Heart right ventricle (tissue), 16 donors: ENCODE measurements at regions of chr1 and their contacts with region 1.

Region 1: GRCh38 chr1:246506674-246507481 is at the start of gene SMYD3:
- DNase-seq: peak; percentile 71 to 84
- ATAC-seq: peak; percentile 96 to 99 (median 98)
- H3K4me3 ChIP-seq: peak within 1 kb of the TSS; percentile 71 to 96 (median 86)
- H3K27ac ChIP-seq: peak within 1 kb of the TSS in 9 of 10 donors; percentile 11 to 77 (median 49)
- H3K4me1 ChIP-seq: peaks cover 0 to 17% (median 8%) of the 10 kb centered on the region in 9 donors
- H3K27me3 ChIP-seq: no peaks in the 10 kb centered on the region
- CTCF ChIP-seq: peak in 4 of 9 donors; percentile 17 to 41 (median 36)
- total RNA-seq, gene SMYD3: 6.1 to 13.9 (median 8.1) TPM

Region 2: GRCh38 chr1:246398126-246398820 is 108.6 kb before region 1 on chr1:
- intact Hi-C with region 1: no loop called
- DNase-seq: no peak
- ATAC-seq: no peak
- H3K4me3 ChIP-seq: no peak overlapping the region
- H3K27ac ChIP-seq: no peak overlapping the region
- H3K4me1 ChIP-seq: no peaks in the 10 kb centered on the region
- H3K27me3 ChIP-seq: no peaks in the 10 kb centered on the region
- CTCF ChIP-seq: no peak

Region 3: DNA sequence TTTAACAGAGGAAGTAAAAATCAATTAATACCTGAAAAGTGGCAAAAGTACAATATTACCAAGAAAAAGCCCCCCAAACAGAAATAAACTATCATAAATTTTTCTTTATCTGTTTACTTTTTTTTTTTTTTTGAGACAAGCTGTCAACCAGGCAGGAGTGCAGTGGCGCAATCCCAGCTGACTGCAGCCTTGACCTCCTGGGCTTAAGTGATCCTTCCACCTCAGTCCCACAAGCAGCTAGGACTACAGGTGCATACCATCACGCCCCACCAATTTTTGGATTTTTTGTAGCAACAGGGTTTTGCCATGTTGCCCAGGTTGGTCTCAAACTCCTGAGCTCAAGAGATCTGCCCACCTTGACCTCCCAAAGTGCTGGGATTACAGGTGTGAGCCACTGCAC is 51.2 kb after region 1 on chr1:
- intact Hi-C with region 1: loop called in 1 of 10 experiments (anchors 5 kb)
- DNase-seq: no peak
- ATAC-seq: no peak
- H3K4me3 ChIP-seq: no peak overlapping the region
- H3K27ac ChIP-seq: no peak overlapping the region
- H3K4me1 ChIP-seq: no peaks in the 10 kb centered on the region
- H3K27me3 ChIP-seq: no peaks in the 10 kb centered on the region
- CTCF ChIP-seq: no peak

Region 4: GRCh38 chr1:246699095-246699735 is 192.3 kb after region 1 on chr1:
- intact Hi-C with region 1: loop called in 2 of 10 experiments (anchors 5 kb)
- DNase-seq: peak; percentile 81 to 92
- ATAC-seq: peak; percentile 88 to 97 (median 92)
- H3K4me3 ChIP-seq: peak overlapping the region in 8 of 10 donors; percentile 4 to 45 (median 34)
- H3K27ac ChIP-seq: peak overlapping the region in 9 of 10 donors; percentile 18 to 87 (median 49)
- H3K4me1 ChIP-seq: peaks cover 3 to 26% (median 10%) of the 10 kb centered on the region in 9 donors
- H3K27me3 ChIP-seq: no peaks in the 10 kb centered on the region
- CTCF ChIP-seq: peak; percentile 74 to 96 (median 91)

Region 5: DNA sequence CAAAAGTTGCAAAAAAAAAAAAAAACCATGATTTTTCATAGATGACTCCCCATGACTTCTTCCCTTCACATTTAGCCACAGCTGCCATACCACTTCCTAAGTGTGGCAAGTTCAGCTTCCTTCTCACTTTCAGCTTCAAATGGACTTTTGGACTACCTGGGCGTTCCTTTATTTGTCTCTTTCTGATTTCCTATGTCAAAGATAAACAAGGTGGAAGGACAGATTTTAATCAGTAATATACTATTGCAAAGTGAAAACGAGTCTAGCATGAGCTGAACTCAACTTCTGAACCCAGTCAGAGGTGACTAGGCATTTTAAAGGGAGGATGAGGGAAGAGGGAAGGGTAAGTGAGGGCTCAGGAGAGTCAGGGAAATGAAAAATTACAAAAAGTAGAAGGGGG is 203.0 kb after region 1 on chr1:
- intact Hi-C with region 1: no loop called
- DNase-seq: no peak
- ATAC-seq: no peak
- H3K4me3 ChIP-seq: no peak overlapping the region
- H3K27ac ChIP-seq: no peak overlapping the region
- H3K4me1 ChIP-seq: peaks cover 0 to 14% (median 0%) of the 10 kb centered on the region in 9 donors
- H3K27me3 ChIP-seq: peaks cover 0 to 6% (median 0%) of the 10 kb centered on the region in 7 donors
- CTCF ChIP-seq: no peak

Region 6: GRCh38 chr1:246753670-246754535 is 247.0 kb after region 1 on chr1:
- intact Hi-C with region 1: loop called in 3 of 10 experiments (anchors 5 to 10 kb)
- DNase-seq: peak; percentile 42 to 53
- ATAC-seq: peak; percentile 43 to 86 (median 76)
- H3K4me3 ChIP-seq: no peak overlapping the region
- H3K27ac ChIP-seq: no peak overlapping the region
- H3K4me1 ChIP-seq: no peaks in the 10 kb centered on the region
- H3K27me3 ChIP-seq: no peaks in the 10 kb centered on the region
- CTCF ChIP-seq: peak; percentile 51 to 81 (median 76)